HAP-1 (cell line): ENCODE measurements at regions of chr5 and their contacts with region 1.

Region 1: GRCh38 chr5:172479044-172479783 is 24.9 kb upstream of the SH3PXD2B start:
- DNase-seq: peak; percentile 85 to 87
- H3K4me3 ChIP-seq: no peak overlapping the region
- H3K4me1 ChIP-seq: no peaks in the 10 kb centered on the region
- H3K27me3 ChIP-seq: peaks cover 3% of the 10 kb centered on the region; the same call in 1 of the 2 replicates

Region 2: DNA sequence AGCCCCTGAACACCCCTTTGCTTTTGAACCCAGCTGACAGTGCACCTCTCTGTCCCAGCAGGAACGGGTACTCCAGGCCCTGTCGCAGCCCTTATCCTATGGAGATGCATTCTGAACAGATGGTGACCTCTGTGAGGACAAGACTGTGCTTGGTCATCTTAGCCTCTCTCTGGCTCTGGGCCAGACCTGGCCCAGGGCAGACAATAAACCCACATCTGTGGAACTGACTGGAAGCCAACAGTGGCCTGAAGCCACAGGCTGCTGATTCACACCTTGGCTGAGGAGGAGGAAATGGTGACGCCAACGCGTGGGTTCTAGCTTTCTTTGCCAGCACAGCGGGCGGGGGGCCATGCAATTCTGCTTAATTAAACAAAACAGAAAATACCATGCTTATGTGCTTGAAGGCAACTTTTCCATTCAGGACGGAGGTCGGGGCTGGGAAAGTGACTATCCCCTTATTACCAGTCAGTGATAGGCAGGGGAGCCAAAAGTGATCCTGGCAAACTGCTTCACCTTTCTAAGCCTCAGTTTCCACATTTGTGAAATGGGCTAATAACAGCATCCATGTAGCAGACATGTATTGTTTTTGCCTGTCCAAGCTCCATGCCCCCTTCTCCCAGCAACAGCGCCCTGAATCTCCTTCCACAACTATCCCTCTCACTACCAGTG is 35.6 kb before region 1 on chr5:
- in situ Hi-C with region 1: no loop called
- DNase-seq: no peak
- H3K4me3 ChIP-seq: no peak overlapping the region
- H3K4me1 ChIP-seq: no peaks in the 10 kb centered on the region
- H3K27me3 ChIP-seq: no peaks in the 10 kb centered on the region

Region 3: DNA sequence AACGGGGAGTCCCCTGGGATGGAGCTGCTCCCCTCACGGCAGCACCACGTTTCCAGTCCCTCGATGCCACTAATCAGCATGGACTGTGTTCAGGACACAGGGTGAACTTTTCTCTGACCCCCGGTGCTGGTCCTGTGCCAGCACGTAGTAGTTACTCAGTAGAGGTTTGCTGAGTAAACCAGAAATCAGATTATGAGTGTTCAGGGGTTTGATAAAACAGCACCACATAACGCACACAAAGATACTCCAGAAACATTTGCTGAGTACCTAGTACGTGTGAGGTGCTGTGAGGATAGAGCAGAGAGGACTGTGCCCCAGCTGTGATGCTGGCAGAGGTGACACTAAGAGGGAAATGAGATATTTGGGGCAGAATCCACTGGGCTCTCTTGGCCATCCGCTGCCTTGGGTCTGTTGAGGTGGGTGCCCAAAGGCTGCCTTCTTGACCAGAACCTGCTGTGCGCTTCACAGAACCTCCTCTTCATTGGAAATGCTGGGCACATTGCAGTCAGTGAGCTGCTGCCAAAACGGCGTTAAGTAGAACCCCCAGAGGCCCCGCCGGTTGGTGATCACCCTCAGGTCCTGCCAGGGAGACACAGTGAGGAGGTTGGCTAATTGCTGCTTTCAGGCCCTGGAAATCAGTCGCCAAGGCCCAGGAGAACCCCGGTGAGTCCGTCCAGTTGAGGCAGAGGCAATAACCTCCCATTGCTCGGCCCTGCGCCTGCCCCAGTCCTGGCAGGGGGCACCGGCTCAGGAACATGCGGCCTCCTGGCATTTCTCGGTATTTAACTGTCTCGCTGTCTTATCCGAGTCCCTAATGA is 211.3 kb after region 1 on chr5:
- in situ Hi-C with region 1: loop called (anchors 5 kb)
- DNase-seq: no peak
- H3K4me3 ChIP-seq: no peak overlapping the region
- H3K4me1 ChIP-seq: no peaks in the 10 kb centered on the region
- H3K27me3 ChIP-seq: no peaks in the 10 kb centered on the region

Region 4: DNA sequence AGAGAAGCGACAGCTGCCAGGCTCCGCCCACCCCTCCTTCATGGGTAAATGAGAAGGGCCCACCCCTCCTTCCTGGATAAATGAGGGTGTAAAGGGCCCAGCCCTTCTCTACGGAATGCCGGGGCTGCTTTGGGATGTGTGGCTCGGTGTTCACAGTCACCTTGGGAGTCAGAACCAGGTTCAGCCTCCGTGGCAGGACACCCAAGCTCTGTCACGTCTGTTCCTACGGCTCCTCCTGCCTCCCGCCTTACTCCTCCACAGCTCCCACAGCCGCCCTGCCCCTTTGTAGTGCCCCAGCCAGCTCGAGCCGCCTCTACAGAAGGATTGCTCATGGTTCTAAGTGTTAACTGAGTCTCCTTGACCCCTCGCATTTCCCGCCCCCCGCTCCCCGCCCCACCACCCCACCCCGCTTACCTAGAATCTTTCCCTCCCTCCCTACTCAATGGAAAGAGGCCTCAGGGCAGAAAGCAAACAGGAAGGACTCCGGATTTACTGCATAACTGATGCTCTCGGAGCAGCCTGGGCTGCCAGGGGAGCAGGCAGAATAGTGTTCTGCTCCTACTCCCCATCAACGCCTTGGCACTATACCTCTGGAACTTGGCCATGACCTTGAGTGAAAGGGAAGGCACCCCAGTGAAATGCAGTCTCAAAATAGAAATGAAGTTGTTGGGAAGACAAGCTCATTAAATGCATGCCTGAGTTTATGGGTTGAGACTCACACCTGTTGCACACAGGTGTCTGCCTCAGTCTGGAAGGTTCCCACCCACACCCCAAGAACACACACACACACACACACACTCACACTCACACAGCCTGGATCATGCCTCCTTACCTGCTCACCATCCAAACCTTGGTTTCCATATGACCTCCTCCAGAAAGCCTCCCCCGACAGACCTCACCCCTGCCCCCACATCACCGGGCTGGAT is 221.4 kb after region 1 on chr5:
- in situ Hi-C with region 1: no loop called
- DNase-seq: peak in 1 of 2 experiments; percentile 62
- H3K4me3 ChIP-seq: no peak overlapping the region
- H3K4me1 ChIP-seq: peaks cover 8% of the 10 kb centered on the region
- H3K27me3 ChIP-seq: no peaks in the 10 kb centered on the region

Region 5: GRCh38 chr5:172920447-172920849 is 441.2 kb after region 1 on chr5:
- in situ Hi-C with region 1: loop called (anchors 10 kb)
- DNase-seq: no peak
- H3K4me3 ChIP-seq: no peak overlapping the region
- H3K4me1 ChIP-seq: no peaks in the 10 kb centered on the region
- H3K27me3 ChIP-seq: no peaks in the 10 kb centered on the region